ENCODE measurements at regions of chr6 and their contacts with region 1.

Region 1: GRCh38 chr6:72616406-72617015 is 5.4 kb upstream of the KCNQ5 start:
- DNase-seq: peak; percentile 39
- H3K4me3 ChIP-seq: no peak overlapping the region
- H3K27ac ChIP-seq: no peak overlapping the region
- H3K4me1 ChIP-seq: peaks cover 2% of the 10 kb centered on the region
- H3K27me3 ChIP-seq: peaks cover 24 to 38% of the 10 kb centered on the region in 2 experiments
- CTCF ChIP-seq: peak; percentile 24 to 31
- POLR2A ChIP-seq: no peak

Region 2: GRCh38 chr6:72286911-72287311 is 329.6 kb before region 1 on chr6:
- CTCF ChIA-PET with region 1: no interaction called
- POLR2A ChIA-PET with region 1: no interaction called
- dilution Hi-C with region 1: no loop called
- intact Hi-C with region 1: no loop called
- DNase-seq: peak; percentile 58
- H3K4me3 ChIP-seq: no peak overlapping the region
- H3K27ac ChIP-seq: peak overlapping the region; percentile 15
- H3K4me1 ChIP-seq: peaks cover 9% of the 10 kb centered on the region
- H3K27me3 ChIP-seq: no peaks in the 10 kb centered on the region
- CTCF ChIP-seq: no peak
- POLR2A ChIP-seq: no peak

Region 3: GRCh38 chr6:72389698-72390097 is 226.8 kb before region 1 on chr6:
- CTCF ChIA-PET with region 1: no interaction called
- POLR2A ChIA-PET with region 1: no interaction called
- dilution Hi-C with region 1: no loop called
- intact Hi-C with region 1: no loop called
- DNase-seq: no peak
- H3K4me3 ChIP-seq: no peak overlapping the region
- H3K27ac ChIP-seq: no peak overlapping the region
- H3K4me1 ChIP-seq: no peaks in the 10 kb centered on the region
- H3K27me3 ChIP-seq: no peaks in the 10 kb centered on the region
- CTCF ChIP-seq: no peak
- POLR2A ChIP-seq: no peak

Region 4: DNA sequence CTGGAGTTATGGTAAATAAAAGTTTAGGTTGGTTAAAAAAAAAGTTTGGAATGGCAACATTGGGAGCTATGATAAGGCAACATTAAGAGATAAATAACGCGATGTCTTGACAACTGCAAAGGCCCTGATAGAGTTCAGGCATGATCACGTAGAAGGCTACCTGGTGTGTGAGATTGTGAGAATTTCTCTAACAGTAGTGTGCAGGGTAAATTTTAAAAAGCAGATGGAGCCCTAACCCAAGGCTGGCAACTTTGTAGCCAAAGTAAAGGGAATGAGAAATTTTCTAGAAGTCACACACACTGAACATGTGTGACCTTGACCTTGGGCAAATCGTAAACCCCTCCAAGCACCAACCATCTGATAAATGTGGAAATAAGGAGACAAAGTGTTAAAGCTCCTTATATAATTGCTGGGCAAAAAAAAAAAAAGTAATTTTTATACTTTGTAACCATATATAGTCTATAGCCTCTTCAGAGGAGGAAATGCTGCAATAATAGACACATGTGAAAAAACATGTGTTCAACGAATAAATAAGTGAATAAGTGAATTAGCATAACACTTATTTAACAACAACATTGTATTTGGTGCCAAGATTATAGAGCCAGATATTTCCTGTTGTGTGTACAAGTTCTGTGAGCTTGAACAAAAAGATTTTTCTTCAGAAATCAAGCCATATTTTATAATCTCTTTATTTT is 23.6 kb after region 1 on chr6:
- CTCF ChIA-PET with region 1: interaction called, 12 read pairs
- POLR2A ChIA-PET with region 1: no interaction called
- dilution Hi-C with region 1: no loop called
- intact Hi-C with region 1: no loop called
- DNase-seq: no peak
- H3K4me3 ChIP-seq: no peak overlapping the region
- H3K27ac ChIP-seq: no peak overlapping the region
- H3K4me1 ChIP-seq: no peaks in the 10 kb centered on the region
- H3K27me3 ChIP-seq: peaks cover 0 to 4% of the 10 kb centered on the region in 2 experiments
- CTCF ChIP-seq: no peak
- POLR2A ChIP-seq: no peak

Region 5: GRCh38 chr6:73180763-73181619 is 564.5 kb after region 1 on chr6:
- CTCF ChIA-PET with region 1: interaction called, 12 read pairs
- POLR2A ChIA-PET with region 1: no interaction called
- dilution Hi-C with region 1: no loop called
- intact Hi-C with region 1: loop called (anchors 1 kb)
- DNase-seq: peak; percentile 55
- H3K4me3 ChIP-seq: no peak overlapping the region
- H3K27ac ChIP-seq: no peak overlapping the region
- H3K4me1 ChIP-seq: no peaks in the 10 kb centered on the region
- H3K27me3 ChIP-seq: peaks cover 11 to 19% of the 10 kb centered on the region in 2 experiments
- CTCF ChIP-seq: peak; percentile 49 to 65
- POLR2A ChIP-seq: no peak